Activated CD4-positive, alpha-beta memory T cell treated with anti-CD3 and anti-CD28 coated beads, Interleukin-2, amount 10 ng/mL, durations not matched to agents 7 days and 5 days (primary cell): ENCODE measurements at regions of chr11 and their contacts with region 1.

Region 1: GRCh38 chr11:95790123-95790932 is at the start of gene CEP57:
- DNase-seq: peak; percentile 95
- H3K4me3 Mint-ChIP-seq: peak within 1 kb of the TSS; percentile 97
- H3K27ac Mint-ChIP-seq: peak within 1 kb of the TSS; percentile 100
- H3K4me1 Mint-ChIP-seq: peaks cover 61% of the 10 kb centered on the region
- H3K27me3 Mint-ChIP-seq: no peaks in the 10 kb centered on the region
- total RNA-seq, gene CEP57: 102 to 105 TPM

Region 2: DNA sequence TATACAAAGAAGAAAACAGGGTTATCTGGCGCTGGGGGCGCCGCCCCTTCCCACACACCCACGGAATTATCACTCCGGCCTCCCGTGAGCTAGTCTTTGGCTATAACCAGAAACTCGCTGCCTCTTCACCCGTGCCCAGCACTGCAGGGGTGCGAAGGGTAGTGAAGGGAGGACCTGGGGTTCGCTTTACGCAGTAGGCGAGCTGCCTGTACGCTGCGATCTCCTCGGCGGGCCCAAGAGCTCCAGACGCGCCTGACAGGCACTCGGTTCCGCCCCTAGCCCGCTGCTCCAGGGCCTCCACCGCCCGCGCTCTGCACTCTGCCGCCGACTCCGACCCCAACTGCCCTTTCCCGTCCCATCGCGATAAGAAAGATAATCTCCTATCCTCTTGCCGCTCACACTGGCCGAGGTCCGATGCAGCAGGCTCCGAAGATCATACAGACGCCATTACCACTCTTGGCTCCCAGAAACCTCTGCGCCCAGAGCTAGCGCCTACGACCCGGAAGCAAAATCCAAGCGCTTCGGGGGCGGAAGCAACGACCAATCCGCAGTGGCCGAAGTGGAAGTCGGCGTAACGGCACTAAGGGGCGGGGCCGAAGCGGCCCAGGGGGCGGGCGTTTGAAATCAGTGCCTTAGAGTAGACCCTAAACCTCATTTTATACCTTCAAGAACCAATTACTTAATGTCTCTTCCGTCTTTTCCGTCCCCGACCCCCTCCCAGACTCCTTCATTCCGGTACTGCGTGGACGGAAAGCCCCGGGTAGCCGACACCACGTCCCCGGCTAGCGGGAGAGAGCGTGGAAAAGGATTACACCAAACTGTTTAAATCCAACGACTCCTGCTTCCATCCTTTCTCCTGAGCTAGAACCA is 817.0 kb before region 1 on chr11 and contains the starts of genes CWC15 and KDM4D:
- CTCF ChIA-PET with region 1: no interaction called
- POLR2A ChIA-PET with region 1: interaction called, 18 read pairs
- DNase-seq: peak; percentile 95
- H3K4me3 Mint-ChIP-seq: peak within 1 kb of the TSS; percentile 99
- H3K27ac Mint-ChIP-seq: peak within 1 kb of the TSS; percentile 88
- H3K4me1 Mint-ChIP-seq: peaks cover 53% of the 10 kb centered on the region
- H3K27me3 Mint-ChIP-seq: no peaks in the 10 kb centered on the region
- total RNA-seq, gene CWC15: 56.5 to 59.1 TPM
- total RNA-seq, gene KDM4D: 0.83 to 1.1 TPM

Region 3: DNA sequence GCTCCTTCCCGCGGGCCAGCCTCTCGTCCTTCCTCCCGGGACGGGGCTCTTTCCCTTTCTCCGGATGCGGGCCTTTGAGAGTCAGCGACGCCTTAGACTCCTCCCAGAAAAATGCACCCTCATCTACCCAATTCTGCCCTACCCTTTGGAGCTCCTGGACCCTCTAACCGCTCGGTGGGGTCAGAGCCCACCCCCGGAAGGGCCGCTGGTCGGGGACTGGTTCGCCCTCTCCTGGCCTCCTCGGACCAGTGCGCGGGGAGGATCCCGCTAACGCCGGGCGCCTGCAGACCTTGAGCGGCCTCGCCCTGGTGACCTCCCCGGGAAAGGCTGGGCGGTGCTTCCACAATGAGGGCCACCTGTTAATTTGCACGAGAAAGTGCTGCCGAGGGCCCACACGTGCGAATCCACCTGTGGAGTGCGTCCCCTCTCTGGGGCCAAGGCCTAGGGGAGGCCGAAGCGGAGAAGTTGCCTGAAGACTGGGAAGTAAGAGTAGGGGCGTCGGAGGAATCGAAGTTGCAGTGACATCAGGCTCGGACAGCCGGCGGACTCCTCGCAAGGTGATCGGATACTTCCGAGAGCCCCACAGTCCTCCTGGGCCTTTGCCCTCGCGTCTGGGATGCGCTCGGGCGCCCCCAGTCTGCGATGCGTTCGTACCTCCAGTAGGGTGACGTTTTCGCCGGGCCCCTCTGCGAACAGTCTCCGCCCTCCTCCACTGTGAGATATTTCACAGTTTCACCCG is 639.2 kb before region 1 on chr11:
- CTCF ChIA-PET with region 1: interaction called, 5 read pairs
- POLR2A ChIA-PET with region 1: interaction called, 57 read pairs
- DNase-seq: peak; percentile 93
- H3K4me3 Mint-ChIP-seq: peak overlapping the region; percentile 85
- H3K27ac Mint-ChIP-seq: peak overlapping the region; percentile 86
- H3K4me1 Mint-ChIP-seq: peaks cover 45% of the 10 kb centered on the region
- H3K27me3 Mint-ChIP-seq: peaks cover 4% of the 10 kb centered on the region

Region 4: GRCh38 chr11:95764267-95764898 is 25.9 kb before region 1 on chr11:
- CTCF ChIA-PET with region 1: no interaction called
- POLR2A ChIA-PET with region 1: interaction called, 21 read pairs
- DNase-seq: no peak
- H3K4me3 Mint-ChIP-seq: no peak overlapping the region
- H3K27ac Mint-ChIP-seq: no peak overlapping the region
- H3K4me1 Mint-ChIP-seq: no peaks in the 10 kb centered on the region
- H3K27me3 Mint-ChIP-seq: no peaks in the 10 kb centered on the region

Region 5: DNA sequence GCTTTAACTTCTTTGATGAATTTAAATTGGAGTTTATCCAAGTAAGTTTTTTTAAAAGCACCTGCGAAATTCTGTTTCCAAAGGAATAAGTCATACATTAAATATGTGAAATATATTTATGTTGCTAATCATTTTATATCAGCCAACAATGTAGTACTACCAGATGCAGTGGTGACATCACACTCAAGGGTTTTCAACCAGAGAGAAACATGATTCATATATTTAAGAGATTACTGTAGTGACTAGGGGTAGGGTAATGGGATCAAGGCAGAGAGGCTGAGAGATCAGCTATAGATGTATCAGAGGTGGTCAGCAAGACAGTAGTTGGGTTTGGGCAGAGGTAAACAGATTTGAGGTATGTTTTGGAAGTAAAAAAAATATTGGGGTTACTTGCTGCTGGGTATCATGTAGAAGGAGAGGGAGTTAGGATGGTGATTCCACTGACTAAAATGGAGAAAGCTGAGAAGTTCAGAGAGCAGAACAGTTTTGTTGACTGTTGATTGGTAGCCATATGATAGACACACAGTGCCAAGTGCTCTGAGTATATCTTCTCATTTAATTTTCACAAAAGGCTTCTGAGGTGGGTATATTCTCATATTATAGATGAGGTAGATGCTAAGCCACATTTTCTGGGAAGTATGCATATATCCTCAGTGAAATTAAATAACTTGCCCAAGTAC is 39.4 kb after region 1 on chr11:
- CTCF ChIA-PET with region 1: no interaction called
- POLR2A ChIA-PET with region 1: interaction called, 10 read pairs
- DNase-seq: no peak
- H3K4me3 Mint-ChIP-seq: no peak overlapping the region
- H3K27ac Mint-ChIP-seq: no peak overlapping the region
- H3K4me1 Mint-ChIP-seq: peaks cover 3% of the 10 kb centered on the region
- H3K27me3 Mint-ChIP-seq: no peaks in the 10 kb centered on the region

Region 6: GRCh38 chr11:96235751-96236150 is 445.4 kb after region 1 on chr11:
- CTCF ChIA-PET with region 1: no interaction called
- POLR2A ChIA-PET with region 1: interaction called, 10 read pairs
- DNase-seq: peak; percentile 69
- H3K4me3 Mint-ChIP-seq: peak overlapping the region; percentile 33
- H3K27ac Mint-ChIP-seq: peak overlapping the region; percentile 58
- H3K4me1 Mint-ChIP-seq: peaks cover 13% of the 10 kb centered on the region
- H3K27me3 Mint-ChIP-seq: no peaks in the 10 kb centered on the region

Region 7: GRCh38 chr11:96389720-96390487 is 599.6 kb after region 1 on chr11 and contains the starts of genes CCDC82 and JRKL:
- CTCF ChIA-PET with region 1: interaction called, 28 read pairs
- POLR2A ChIA-PET with region 1: interaction called, 110 read pairs
- DNase-seq: peak; percentile 98
- H3K4me3 Mint-ChIP-seq: peak within 1 kb of the TSS; percentile 85
- H3K27ac Mint-ChIP-seq: peak within 1 kb of the TSS; percentile 81
- H3K4me1 Mint-ChIP-seq: peaks cover 55% of the 10 kb centered on the region
- H3K27me3 Mint-ChIP-seq: no peaks in the 10 kb centered on the region
- total RNA-seq, gene CCDC82: 31.5 to 32.9 TPM
- total RNA-seq, gene JRKL: 11.9 to 12.0 TPM